Lower lobe of right lung (tissue), 2 donors: ENCODE measurements at regions of chr6 and their contacts with region 1.

Region 1: GRCh38 chr6:44237813-44238433 is 9.0 kb upstream of the HSP90AB1 start:
- DNase-seq: peak; percentile 88
- ATAC-seq: peak; percentile 94 to 96
- H3K4me3 ChIP-seq: peak overlapping the region; percentile 66
- H3K27ac ChIP-seq: peak overlapping the region; percentile 93
- H3K4me1 ChIP-seq: peaks cover 43% of the 10 kb centered on the region
- H3K27me3 ChIP-seq: no peaks in the 10 kb centered on the region
- CTCF ChIP-seq: peak; percentile 98

Region 2: GRCh38 chr6:44172731-44173500 is 65.0 kb before region 1 on chr6:
- intact Hi-C with region 1: loop called (anchors 10 kb)
- DNase-seq: peak; percentile 88
- ATAC-seq: peak; percentile 94 to 95
- H3K4me3 ChIP-seq: no peak overlapping the region
- H3K27ac ChIP-seq: no peak overlapping the region
- H3K4me1 ChIP-seq: peaks cover 3% of the 10 kb centered on the region
- H3K27me3 ChIP-seq: no peaks in the 10 kb centered on the region
- CTCF ChIP-seq: peak; percentile 89